Activated CD4-positive, alpha-beta memory T cell treated with anti-CD3 and anti-CD28 coated beads for 36 hours (primary cell): ENCODE measurements at regions of chr17 and their contacts with region 1.

Region 1: DNA sequence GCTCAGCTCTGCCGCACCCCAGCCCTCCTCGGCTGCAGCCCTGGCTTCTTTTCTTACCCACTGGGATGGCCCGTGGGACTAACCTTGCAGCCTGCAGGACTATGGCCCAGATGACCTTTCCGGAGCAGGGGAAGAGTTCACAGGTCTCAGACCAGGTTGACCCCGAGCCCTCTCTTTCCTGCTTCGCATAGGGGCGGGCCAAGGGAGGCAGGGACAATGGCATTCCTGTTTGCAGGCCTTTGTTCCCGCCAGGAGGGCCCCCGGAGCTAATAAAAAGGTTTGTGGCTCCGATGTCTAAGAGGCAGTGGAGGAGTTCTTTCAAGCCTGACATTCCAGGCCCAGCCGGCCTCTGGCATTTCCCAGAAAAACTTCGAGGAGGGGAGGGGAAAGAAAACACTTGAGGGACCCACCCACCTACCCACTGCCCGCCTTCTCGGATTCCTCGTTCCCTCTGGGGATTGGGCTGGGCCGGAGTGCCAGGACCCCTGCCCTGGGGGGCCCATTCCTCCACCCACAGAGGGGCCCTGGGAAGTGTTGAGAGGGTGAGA is 5.8 kb upstream of the SOCS3 start:
- DNase-seq: no peak
- H3K4me3 Mint-ChIP-seq: no peak overlapping the region
- H3K27ac Mint-ChIP-seq: peak overlapping the region; percentile 28
- H3K4me1 Mint-ChIP-seq: peaks cover 32% of the 10 kb centered on the region
- H3K27me3 Mint-ChIP-seq: peaks cover 7% of the 10 kb centered on the region

Region 2: GRCh38 chr17:78214706-78215061 is 151.0 kb before region 1 on chr17:
- CTCF ChIA-PET with region 1: no interaction called
- POLR2A ChIA-PET with region 1: no interaction called
- intact Hi-C with region 1: no loop called
- DNase-seq: no peak
- H3K4me3 Mint-ChIP-seq: peak overlapping the region; percentile 96
- H3K27ac Mint-ChIP-seq: peak overlapping the region; percentile 78
- H3K4me1 Mint-ChIP-seq: peaks cover 12% of the 10 kb centered on the region
- H3K27me3 Mint-ChIP-seq: no peaks in the 10 kb centered on the region

Region 3: GRCh38 chr17:78378225-78379130 is 12.8 kb after region 1 on chr17 and contains the start of gene PGS1:
- CTCF ChIA-PET with region 1: interaction called, 35 read pairs
- POLR2A ChIA-PET with region 1: interaction called, 28 read pairs
- intact Hi-C with region 1: loop called (anchors 1 kb)
- DNase-seq: peak; percentile 89
- H3K4me3 Mint-ChIP-seq: peak within 1 kb of the TSS; percentile 99
- H3K27ac Mint-ChIP-seq: peak within 1 kb of the TSS; percentile 99
- H3K4me1 Mint-ChIP-seq: peaks cover 62% of the 10 kb centered on the region
- H3K27me3 Mint-ChIP-seq: peaks cover 2% of the 10 kb centered on the region
- total RNA-seq, gene PGS1: 75.8 to 78.1 TPM

Region 4: DNA sequence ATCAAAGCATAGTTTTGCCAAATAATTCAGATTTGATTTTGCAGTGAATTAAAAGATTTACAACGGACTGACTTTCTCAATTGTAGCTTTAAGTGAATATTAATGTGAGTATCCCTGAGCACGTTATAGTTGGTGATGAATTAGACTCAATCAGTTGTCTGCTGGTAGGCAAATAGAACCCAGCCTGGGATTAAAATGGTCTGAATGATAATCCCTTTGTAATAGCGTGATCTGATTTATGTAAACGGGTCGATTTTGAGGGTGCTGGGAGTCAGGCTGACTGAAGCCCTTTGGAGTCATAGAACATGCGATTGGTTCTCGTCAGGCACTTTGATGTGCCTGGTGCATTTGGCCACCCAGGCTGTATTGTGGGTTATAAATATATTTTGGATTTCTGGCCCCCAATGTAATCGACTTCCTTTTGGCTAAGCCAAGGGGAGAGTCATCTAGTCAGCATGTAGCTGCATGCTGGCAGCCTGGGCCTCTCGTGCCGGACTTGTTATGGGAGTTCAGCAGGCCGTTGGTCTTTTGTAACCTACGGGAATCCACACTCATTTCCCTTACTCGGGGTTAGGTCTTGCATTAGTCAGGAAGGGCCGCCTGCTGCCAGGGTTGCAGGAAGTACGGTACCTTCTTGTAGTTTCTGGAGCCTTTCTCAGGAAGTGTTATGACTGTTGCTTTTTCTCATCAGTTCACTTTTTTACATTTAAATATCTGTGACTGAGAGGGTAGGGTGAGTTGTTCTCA is 18.3 kb after region 1 on chr17:
- CTCF ChIA-PET with region 1: interaction called, 35 read pairs
- POLR2A ChIA-PET with region 1: interaction called, 28 read pairs
- intact Hi-C with region 1: loop called (anchors 1 kb)
- DNase-seq: peak; percentile 88
- H3K4me3 Mint-ChIP-seq: peak overlapping the region; percentile 75
- H3K27ac Mint-ChIP-seq: peak overlapping the region; percentile 99
- H3K4me1 Mint-ChIP-seq: peaks cover 87% of the 10 kb centered on the region
- H3K27me3 Mint-ChIP-seq: peaks cover 1% of the 10 kb centered on the region